ENCODE measurements at regions of chr2 and their contacts with region 1.

Region 1: DNA sequence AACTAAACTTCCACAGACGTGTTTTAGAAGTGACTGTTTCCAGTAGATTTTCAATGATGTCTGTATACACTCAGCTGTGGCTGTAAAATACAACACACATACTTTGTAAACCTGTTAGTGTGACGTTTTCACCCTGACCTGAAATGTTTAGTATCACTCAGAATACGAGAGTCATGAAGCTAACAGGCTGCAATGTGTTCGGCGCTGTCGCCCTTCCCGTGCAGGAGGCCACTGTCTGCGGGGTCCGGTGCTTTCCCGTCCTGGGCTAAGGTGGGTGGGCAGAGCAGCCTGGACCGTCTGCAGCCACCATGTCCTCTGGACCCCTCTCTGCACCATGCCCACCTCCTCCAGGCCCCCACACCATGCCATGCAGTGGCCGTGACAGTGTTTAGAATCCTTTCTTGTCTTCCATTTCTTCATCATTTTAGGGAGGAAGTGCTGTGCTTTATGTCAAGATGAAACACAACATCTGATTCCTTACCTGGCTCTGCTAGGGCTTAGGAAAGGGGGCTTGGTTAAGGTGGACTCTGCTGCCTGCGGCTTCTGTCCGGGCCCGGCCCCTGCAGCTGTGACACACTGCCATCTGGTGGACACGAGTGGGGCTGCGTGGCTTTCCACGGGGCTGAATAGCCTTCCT is 53.8 kb upstream of the RBM44 start:
- DNase-seq: peak; percentile 74
- H3K4me3 Mint-ChIP-seq: no peak overlapping the region
- H3K27ac Mint-ChIP-seq: peak overlapping the region; percentile 68
- H3K4me1 Mint-ChIP-seq: peaks cover 21% of the 10 kb centered on the region
- H3K27me3 Mint-ChIP-seq: no peaks in the 10 kb centered on the region

Region 2: GRCh38 chr2:237731663-237732062 is 13.1 kb before region 1 on chr2:
- CTCF ChIA-PET with region 1: interaction called, 13 read pairs
- POLR2A ChIA-PET with region 1: no interaction called
- DNase-seq: no peak
- H3K4me3 Mint-ChIP-seq: no peak overlapping the region
- H3K27ac Mint-ChIP-seq: no peak overlapping the region
- H3K4me1 Mint-ChIP-seq: peaks cover 37% of the 10 kb centered on the region
- H3K27me3 Mint-ChIP-seq: no peaks in the 10 kb centered on the region